Panc1 (cell line): ENCODE measurements at regions of chr1 and their contacts with region 1.

Region 1: DNA sequence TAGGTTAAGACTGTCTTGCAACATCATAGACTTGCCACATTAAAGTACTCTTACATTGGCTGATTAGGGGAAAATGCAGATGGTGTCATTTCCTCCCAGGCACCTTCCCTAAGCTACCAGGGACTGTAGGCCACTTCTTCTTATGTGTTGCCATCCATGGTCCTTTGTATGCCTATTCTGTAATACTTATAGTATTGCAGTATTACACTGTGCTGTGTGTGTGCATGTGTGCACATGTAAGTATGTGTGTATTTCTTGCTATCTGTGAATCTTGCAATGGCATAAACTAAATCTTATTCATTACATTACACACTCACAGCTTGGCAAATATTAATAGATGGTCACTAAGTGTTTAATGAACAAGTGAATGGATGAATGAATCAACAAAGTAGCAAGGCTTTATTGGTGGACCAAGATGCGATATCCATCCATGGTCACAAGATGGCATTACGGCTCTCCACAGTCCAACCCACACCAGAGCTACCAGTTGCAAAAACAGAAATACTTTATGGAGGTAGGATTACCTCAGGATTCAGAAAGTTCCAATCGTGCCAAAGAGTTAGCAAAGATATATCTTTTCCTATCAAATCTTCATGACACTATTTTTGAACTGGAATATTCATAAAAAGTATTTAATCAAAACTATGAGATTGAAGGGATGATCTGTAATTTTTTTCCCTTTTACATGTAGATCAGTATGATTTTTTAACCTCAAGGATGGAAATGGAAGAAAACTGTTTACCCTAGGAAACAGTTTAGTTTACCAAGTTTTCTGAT is 160.2 kb downstream of the DENND1B start:
- DNase-seq: no peak
- ATAC-seq: peak; percentile 95
- H3K4me3 ChIP-seq: no peak overlapping the region
- H3K27ac ChIP-seq: no peak overlapping the region
- H3K4me1 ChIP-seq: 0 out of 2 replicates have a peak, but pooled peaks cover 4% of the 10 kb centered on the region
- H3K27me3 ChIP-seq: no peaks in the 10 kb centered on the region
- CTCF ChIP-seq: peak; percentile 80

Region 2: GRCh38 chr1:197399755-197400527 is 215.2 kb before region 1 on chr1:
- CTCF ChIA-PET with region 1: no interaction called
- POLR2A ChIA-PET with region 1: no interaction called
- in situ Hi-C with region 1: no loop called
- intact Hi-C with region 1: no loop called
- DNase-seq: peak; percentile 12
- ATAC-seq: no peak
- H3K4me3 ChIP-seq: no peak overlapping the region
- H3K27ac ChIP-seq: no peak overlapping the region
- H3K4me1 ChIP-seq: no peaks in the 10 kb centered on the region; the same call in 1 of the 2 replicates
- H3K27me3 ChIP-seq: no peaks in the 10 kb centered on the region
- CTCF ChIP-seq: peak; percentile 82

Region 3: GRCh38 chr1:197868751-197869489 is 253.8 kb after region 1 on chr1:
- CTCF ChIA-PET with region 1: interaction called, 7 read pairs
- POLR2A ChIA-PET with region 1: no interaction called
- in situ Hi-C with region 1: no loop called
- intact Hi-C with region 1: loop called (anchors 2 kb)
- DNase-seq: peak; percentile 45
- ATAC-seq: peak; percentile 93
- H3K4me3 ChIP-seq: no peak overlapping the region
- H3K27ac ChIP-seq: no peak overlapping the region
- H3K4me1 ChIP-seq: no peaks in the 10 kb centered on the region
- H3K27me3 ChIP-seq: no peaks in the 10 kb centered on the region; the same call in 1 of the 2 replicates
- CTCF ChIP-seq: peak; percentile 74

Region 4: GRCh38 chr1:197924516-197925123 is 309.5 kb after region 1 on chr1:
- CTCF ChIA-PET with region 1: interaction called, 3 read pairs
- POLR2A ChIA-PET with region 1: no interaction called
- in situ Hi-C with region 1: no loop called
- intact Hi-C with region 1: loop called (anchors 5 kb)
- DNase-seq: no peak
- ATAC-seq: peak; percentile 82
- H3K4me3 ChIP-seq: no peak overlapping the region
- H3K27ac ChIP-seq: no peak overlapping the region
- H3K4me1 ChIP-seq: no peaks in the 10 kb centered on the region; the same call in 1 of the 2 replicates
- H3K27me3 ChIP-seq: peaks cover 9% of the 10 kb centered on the region
- CTCF ChIP-seq: peak; percentile 74

Region 5: DNA sequence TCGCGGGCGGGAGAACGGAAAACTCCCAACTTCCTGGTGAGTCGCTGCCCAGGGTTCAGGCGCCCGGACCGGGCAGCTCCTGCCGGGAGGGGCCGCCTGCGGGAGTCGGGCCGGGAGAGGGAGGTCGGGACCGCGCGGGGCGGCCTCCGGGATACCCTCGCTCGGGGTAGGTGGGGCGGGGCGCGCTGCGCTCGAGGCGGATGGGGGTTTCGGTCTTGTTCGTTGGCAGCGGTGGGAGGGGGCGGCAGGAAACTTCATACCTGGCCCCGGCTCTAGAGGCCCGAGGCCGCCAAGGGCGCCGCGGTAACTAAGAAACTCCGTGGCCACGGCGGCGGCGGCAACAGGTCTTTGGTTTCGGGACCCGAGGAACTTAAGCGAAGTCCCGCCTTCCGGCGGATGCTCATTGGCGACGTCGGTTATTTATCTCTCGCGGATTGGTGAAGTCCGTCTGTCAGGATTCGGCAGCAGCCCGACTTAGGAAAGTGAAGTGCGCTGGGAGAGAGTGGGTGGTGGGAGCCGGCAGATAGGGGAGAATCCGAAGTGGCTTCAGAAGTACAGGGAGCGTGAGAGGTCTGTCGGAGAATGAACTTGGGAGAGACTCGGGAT is 542.2 kb after region 1 on chr1:
- CTCF ChIA-PET with region 1: no interaction called
- POLR2A ChIA-PET with region 1: no interaction called
- in situ Hi-C with region 1: no loop called
- intact Hi-C with region 1: loop called (anchors 10 kb)
- DNase-seq: peak; percentile 70
- ATAC-seq: peak; percentile 80
- H3K4me3 ChIP-seq: peak overlapping the region; percentile 87 to 88
- H3K27ac ChIP-seq: peak overlapping the region; percentile 99
- H3K4me1 ChIP-seq: peaks cover 33% of the 10 kb centered on the region
- H3K27me3 ChIP-seq: no peaks in the 10 kb centered on the region
- CTCF ChIP-seq: no peak

Region 6: DNA sequence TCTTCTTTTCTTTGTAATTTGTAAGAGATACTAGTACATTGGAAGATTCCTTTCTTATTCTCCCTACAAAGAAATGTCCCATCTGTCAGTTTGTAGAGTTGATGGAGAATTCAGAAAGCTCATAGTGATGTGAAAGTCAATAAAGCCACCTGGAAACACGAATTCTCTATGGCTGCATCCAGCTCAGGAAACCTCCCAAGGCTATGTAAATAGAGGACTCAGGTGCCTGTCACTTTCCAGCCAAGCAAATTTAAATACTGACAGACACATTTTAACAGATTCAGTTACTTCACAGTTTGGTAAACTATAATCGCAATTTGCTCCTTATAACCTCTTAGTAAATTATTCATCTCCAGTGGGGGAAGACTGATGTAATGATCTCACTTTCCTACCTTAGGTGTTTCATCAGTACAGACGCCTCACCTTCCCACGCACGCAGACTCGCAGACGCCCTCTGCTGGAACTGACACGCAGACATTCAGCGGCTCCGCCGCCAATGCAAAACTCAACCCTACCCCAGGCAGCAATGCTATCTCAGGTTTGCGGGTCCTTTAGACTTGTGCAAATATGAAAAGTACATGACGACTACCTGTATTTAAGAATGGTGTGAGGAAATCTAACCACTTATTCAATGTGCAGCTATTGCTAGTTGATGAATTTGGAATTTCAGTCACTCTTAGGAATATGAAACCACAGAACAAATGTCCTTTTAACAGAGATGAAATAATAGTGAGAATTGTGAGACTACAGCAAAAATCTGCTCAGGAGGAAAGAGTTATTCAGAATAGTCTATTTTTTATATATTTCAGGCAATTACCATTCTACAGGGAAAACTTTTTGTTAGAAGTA is 1084.3 kb after region 1 on chr1:
- CTCF ChIA-PET with region 1: no interaction called
- POLR2A ChIA-PET with region 1: no interaction called
- in situ Hi-C with region 1: no loop called
- intact Hi-C with region 1: loop called (anchors 10 kb)
- DNase-seq: peak; percentile 43
- ATAC-seq: peak; percentile 94
- H3K4me3 ChIP-seq: no peak overlapping the region
- H3K27ac ChIP-seq: no peak overlapping the region
- H3K4me1 ChIP-seq: no peaks in the 10 kb centered on the region
- H3K27me3 ChIP-seq: peaks cover 5% of the 10 kb centered on the region
- CTCF ChIP-seq: peak; percentile 95